CD4-positive, alpha-beta memory T cell (primary cell): ENCODE measurements at regions of chr14 and their contacts with region 1.

Region 1: DNA sequence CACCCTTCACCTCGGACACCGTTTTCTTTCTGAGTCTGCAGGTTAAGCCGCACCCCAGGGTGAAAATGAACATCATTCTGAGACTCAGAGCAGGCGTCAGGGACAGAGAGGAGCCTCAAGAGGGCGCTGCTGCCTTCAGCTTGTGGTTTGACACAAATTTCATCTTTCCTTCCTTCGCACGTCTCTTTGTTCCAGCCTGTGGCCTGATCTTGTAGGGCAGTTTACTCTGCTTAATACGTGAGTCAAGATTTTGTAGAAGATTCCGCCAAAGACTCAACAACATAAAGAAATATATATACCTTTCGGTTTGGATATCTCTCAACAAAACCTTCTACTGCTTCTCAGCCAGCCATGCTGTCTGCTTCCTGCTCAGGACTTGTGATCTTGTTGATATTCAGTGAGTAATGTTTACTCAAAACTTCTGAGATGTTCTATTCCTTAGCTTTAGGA is 329.3 kb upstream of the OR4E1 start:
- DNase-seq: peak; percentile 53 to 73 (median 63)
- H3K4me3 ChIP-seq: peak overlapping the region; percentile 3 to 38
- H3K4me3 Mint-ChIP-seq: peak overlapping the region; percentile 70 to 83 (median 76)
- H3K27ac ChIP-seq: peak overlapping the region; percentile 59
- H3K27ac Mint-ChIP-seq: peak overlapping the region; percentile 61 to 94 (median 91)
- H3K4me1 ChIP-seq: peaks cover 23% of the 10 kb centered on the region
- H3K4me1 Mint-ChIP-seq: peaks cover 14 to 27% (median 17%) of the 10 kb centered on the region in 4 donors
- H3K27me3 ChIP-seq: no peaks in the 10 kb centered on the region
- H3K27me3 Mint-ChIP-seq: no peaks in the 10 kb centered on the region

Region 2: DNA sequence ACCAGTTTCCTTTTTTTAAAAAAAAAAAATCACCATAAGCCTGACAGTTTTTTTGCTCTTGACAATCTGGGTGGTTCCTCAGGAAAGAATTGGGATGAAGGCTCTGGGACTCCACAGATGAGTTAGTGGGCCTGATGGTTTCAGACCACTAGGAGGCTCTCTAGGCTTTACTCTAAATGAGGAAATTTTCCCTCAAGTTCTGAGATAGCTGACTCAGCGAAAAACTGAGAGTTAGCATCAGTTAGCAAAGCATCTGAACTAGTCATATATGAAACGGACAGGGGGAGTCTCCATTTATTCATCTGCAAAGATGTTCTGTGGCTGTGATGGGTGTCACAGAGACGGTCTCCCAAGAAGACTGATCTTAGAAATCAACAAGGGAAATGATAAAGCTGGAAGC is 14.9 kb before region 1 on chr14:
- CTCF ChIA-PET with region 1: interaction called, 14 read pairs
- POLR2A ChIA-PET with region 1: interaction called, 8 read pairs
- intact Hi-C with region 1: no loop called
- DNase-seq: peak in 1 of 5 donors; percentile 24
- H3K4me3 ChIP-seq: no peak overlapping the region
- H3K4me3 Mint-ChIP-seq: peak overlapping the region in 1 of 8 donors; percentile 44
- H3K27ac ChIP-seq: no peak overlapping the region
- H3K27ac Mint-ChIP-seq: peak overlapping the region in 3 of 7 donors; percentile 6 to 70 (median 35)
- H3K4me1 ChIP-seq: no peaks in the 10 kb centered on the region
- H3K4me1 Mint-ChIP-seq: peaks cover 4 to 7% (median 6%) of the 10 kb centered on the region in 4 donors
- H3K27me3 ChIP-seq: no peaks in the 10 kb centered on the region
- H3K27me3 Mint-ChIP-seq: peaks cover 0 to 4% of the 10 kb centered on the region in 2 donors

Region 3: GRCh38 chr14:22039938-22040775 is 37.3 kb after region 1 on chr14:
- CTCF ChIA-PET with region 1: interaction called, 5 read pairs
- POLR2A ChIA-PET with region 1: interaction called, 11 read pairs
- intact Hi-C with region 1: loop called (anchors 1 kb)
- DNase-seq: peak; percentile 38 to 56 (median 44)
- H3K4me3 ChIP-seq: peak overlapping the region in 1 of 2 donors; percentile 14
- H3K4me3 Mint-ChIP-seq: peak overlapping the region; percentile 40 to 82 (median 78)
- H3K27ac ChIP-seq: no peak overlapping the region
- H3K27ac Mint-ChIP-seq: peak overlapping the region; percentile 30 to 92 (median 80)
- H3K4me1 ChIP-seq: no peaks in the 10 kb centered on the region
- H3K4me1 Mint-ChIP-seq: peaks cover 2 to 11% (median 4%) of the 10 kb centered on the region in 4 donors
- H3K27me3 ChIP-seq: no peaks in the 10 kb centered on the region
- H3K27me3 Mint-ChIP-seq: no peaks in the 10 kb centered on the region